PC-3 (cell line): ENCODE measurements at regions of chr12 and their contacts with region 1.

Region 1: GRCh38 chr12:84891106-84891838 is 21.3 kb downstream of the SLC6A15 start:
- DNase-seq: no peak
- ATAC-seq: no peak
- H3K4me3 ChIP-seq: no peak overlapping the region
- H3K27ac ChIP-seq: no peak overlapping the region
- H3K4me1 ChIP-seq: no peaks in the 10 kb centered on the region
- H3K27me3 ChIP-seq: peaks cover 29% of the 10 kb centered on the region
- CTCF ChIP-seq: no peak

Region 2: DNA sequence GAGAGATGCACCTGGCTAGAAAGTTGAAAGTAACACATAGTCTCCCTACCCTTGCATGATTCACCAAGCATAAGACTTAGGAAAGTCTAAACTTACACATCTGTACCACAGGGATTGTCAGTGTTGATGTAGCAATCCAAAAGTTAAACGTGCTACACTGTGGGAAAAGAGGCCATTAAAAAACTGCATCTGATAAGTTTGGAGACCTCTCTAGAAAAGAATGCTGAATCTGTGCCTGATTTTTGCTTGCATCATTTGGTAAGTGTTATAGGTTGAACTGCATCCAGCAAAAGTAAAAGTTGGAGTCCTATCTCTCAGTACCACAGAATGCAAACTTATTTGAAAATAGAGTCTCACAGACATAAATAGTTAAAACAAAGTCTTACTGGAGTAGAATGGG is 105.3 kb before region 1 on chr12:
- CTCF ChIA-PET with region 1: no interaction called
- POLR2A ChIA-PET with region 1: no interaction called
- intact Hi-C with region 1: no loop called
- DNase-seq: no peak
- ATAC-seq: no peak
- H3K4me3 ChIP-seq: no peak overlapping the region
- H3K27ac ChIP-seq: no peak overlapping the region
- H3K4me1 ChIP-seq: no peaks in the 10 kb centered on the region
- H3K27me3 ChIP-seq: no peaks in the 10 kb centered on the region
- CTCF ChIP-seq: no peak

Region 3: DNA sequence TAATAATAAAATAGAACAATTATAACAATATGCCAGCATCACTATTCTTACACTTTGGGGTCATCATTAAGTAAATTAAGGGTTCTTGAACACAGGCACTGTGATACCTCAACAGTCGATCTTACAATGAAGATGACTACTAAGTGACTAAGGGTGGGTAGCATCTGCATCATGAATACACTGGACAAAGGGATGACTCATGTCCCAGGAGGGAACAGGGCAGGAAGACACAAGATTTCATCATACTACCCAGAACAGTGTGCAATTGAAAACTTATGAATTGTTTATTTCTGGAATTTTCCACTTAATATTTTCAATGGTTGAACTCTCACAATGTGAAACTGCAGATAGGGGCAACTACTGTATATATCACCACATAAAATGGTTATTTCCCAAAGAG is 125.2 kb after region 1 on chr12:
- CTCF ChIA-PET with region 1: interaction called, 14 read pairs
- POLR2A ChIA-PET with region 1: no interaction called
- intact Hi-C with region 1: no loop called
- DNase-seq: peak; percentile 84
- ATAC-seq: peak; percentile 100
- H3K4me3 ChIP-seq: no peak overlapping the region
- H3K27ac ChIP-seq: no peak overlapping the region
- H3K4me1 ChIP-seq: peaks cover 8% of the 10 kb centered on the region
- H3K27me3 ChIP-seq: no peaks in the 10 kb centered on the region
- CTCF ChIP-seq: no peak